Activated naive CD4-positive, alpha-beta T cell treated with anti-CD3 and anti-CD28 coated beads for 36 hours (primary cell): ENCODE measurements at regions of chr3 and their contacts with region 1.

Region 1: DNA sequence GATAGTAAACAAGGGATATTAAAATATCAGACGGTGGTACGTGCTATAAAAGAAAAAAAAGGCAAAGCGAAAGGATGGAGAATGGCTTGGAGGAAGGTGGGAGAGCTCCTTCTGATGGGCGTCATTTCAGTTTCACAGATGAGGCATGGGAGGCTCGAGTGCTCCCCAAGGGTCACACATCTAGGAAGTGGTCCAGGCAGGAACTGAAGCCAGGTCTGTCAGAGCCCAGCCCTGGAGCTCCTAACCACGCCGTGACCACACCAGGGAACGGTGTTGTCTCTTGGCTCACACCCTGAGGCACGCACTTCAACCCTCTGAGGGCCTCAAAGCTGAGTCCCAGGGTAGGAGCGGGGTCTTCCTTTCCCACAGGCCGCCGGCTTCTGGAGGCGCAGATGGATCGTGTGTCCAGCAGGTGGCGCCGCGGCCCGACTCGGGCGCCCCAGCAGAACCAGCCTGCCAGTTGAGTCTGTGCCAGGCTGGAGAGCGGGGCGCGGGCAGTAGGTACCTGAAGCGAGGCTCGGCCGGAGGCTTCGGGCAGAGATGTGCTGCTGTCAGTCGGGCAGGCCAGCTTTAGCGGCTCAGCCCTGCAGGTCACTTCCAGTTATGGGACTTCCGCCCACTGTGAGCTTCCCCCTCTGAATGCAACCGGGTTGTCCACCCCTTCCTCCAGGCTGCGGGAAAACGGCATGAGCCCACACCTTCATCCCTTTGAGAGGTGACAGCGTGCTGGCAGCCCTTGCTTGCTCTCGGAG is 68.1 kb downstream of the SLC6A1 start:
- DNase-seq: peak; percentile 51
- H3K4me3 Mint-ChIP-seq: no peak overlapping the region
- H3K27ac Mint-ChIP-seq: no peak overlapping the region
- H3K4me1 Mint-ChIP-seq: no peaks in the 10 kb centered on the region
- H3K27me3 Mint-ChIP-seq: peaks cover 13% of the 10 kb centered on the region

Region 2: DNA sequence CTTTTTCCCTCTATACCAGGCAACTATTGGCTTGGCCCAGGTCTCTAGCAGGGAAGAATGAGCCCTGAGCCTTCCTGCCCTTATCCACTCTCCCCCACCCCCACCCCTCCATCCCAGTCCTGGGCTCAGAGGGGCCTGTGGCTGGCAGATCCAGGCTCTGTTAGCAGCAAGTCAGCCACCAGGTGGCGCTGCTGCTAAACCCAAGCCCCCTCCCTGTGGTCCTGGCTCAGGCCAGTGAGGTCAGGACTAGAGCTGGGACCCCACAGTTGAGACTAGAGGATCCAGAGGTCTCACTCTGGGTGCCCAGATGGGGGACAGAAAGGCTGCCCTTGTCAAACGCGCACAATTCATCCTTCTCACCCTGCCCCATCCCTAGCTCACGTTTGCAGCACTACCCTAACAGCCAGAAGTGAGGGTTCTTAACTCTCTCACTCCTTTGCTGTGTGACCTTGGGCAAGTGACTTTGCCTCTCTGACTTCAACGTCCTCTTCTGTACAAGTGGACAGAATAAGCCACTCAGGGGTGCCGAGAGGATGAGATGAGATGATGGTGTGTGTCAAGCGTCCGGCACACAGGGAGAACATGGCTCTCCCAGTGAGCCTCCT is 114.9 kb before region 1 on chr3:
- CTCF ChIA-PET with region 1: interaction called, 39 read pairs
- intact Hi-C with region 1: loop called (anchors 1 kb)
- DNase-seq: peak; percentile 70
- H3K4me3 Mint-ChIP-seq: no peak overlapping the region
- H3K27ac Mint-ChIP-seq: no peak overlapping the region
- H3K4me1 Mint-ChIP-seq: no peaks in the 10 kb centered on the region
- H3K27me3 Mint-ChIP-seq: peaks cover 15% of the 10 kb centered on the region

Region 3: DNA sequence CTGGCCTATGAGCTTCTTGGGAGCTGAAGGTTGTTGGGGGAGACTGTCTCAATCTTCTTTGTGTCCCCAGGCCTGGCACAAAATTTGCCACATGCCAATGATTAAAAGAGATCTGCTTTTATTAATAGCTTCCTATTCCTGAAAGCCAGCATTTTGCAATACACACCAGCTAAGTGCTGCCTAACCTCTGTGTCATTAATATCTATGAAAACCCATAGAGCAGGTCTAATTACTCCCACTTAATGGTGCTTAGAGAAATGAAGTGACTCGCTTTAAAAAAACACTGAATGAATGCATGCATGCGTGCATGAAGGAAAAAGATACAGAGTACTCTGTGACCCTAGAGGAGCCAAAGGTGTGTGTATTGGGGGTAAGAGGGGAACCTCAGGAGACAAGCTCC is 13.2 kb before region 1 on chr3:
- CTCF ChIA-PET with region 1: interaction called, 11 read pairs
- intact Hi-C with region 1: no loop called
- DNase-seq: no peak
- H3K4me3 Mint-ChIP-seq: no peak overlapping the region
- H3K27ac Mint-ChIP-seq: no peak overlapping the region
- H3K4me1 Mint-ChIP-seq: no peaks in the 10 kb centered on the region
- H3K27me3 Mint-ChIP-seq: peaks cover 5% of the 10 kb centered on the region

Region 4: GRCh38 chr3:11206316-11206715 is 145.6 kb after region 1 on chr3:
- CTCF ChIA-PET with region 1: interaction called, 3 read pairs
- intact Hi-C with region 1: loop called (anchors 1 kb)
- DNase-seq: no peak
- H3K4me3 Mint-ChIP-seq: no peak overlapping the region
- H3K27ac Mint-ChIP-seq: no peak overlapping the region
- H3K4me1 Mint-ChIP-seq: no peaks in the 10 kb centered on the region
- H3K27me3 Mint-ChIP-seq: peaks cover 4% of the 10 kb centered on the region